RWPE1 (cell line): ENCODE measurements at regions of chr19 and their contacts with region 1.

Region 1: GRCh38 chr19:39843919-39844793 is 2.0 kb downstream of the FBL start:
- DNase-seq: no peak
- H3K27ac ChIP-seq: no peak overlapping the region
- CTCF ChIP-seq: peak; percentile 79

Region 2: DNA sequence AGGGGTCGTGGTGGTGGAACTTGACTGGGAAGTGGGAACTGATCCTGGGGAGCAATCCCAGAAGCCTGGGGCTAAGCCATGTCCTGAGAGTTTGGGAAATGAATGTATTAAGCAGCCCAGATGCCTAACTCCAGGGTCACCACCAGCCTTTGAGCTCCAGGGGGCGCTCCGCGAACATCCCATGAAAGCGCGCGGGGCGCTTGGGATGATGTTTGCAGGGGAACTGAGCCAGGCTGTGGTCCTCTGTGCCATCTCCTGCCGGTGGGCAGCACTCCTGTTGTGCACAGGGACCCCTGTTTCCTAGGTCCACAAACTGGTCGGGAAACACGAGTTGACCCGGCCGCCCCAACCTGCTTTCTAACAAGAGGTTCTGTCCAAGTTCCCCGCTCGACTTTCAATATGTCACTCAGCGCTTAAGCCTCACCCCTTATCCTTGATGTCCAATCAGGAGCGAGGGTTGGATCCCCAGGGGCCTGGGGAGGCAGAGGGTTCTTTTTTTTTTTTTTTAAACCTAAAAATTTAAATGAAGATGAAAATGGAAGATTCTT is 51.1 kb before region 1 on chr19:
- CTCF ChIA-PET with region 1: interaction called, 11 read pairs
- POLR2A ChIA-PET with region 1: no interaction called
- DNase-seq: peak; percentile 87
- H3K27ac ChIP-seq: no peak overlapping the region
- CTCF ChIP-seq: peak; percentile 94

Region 3: GRCh38 chr19:39833464-39834286 is 10.5 kb before region 1 on chr19 and contains the start of gene DYRK1B:
- CTCF ChIA-PET with region 1: interaction called, 12 read pairs
- POLR2A ChIA-PET with region 1: interaction called, 6 read pairs
- DNase-seq: peak; percentile 99
- H3K27ac ChIP-seq: peak within 1 kb of the TSS; percentile 92
- CTCF ChIP-seq: no peak